Cardiac septum (tissue), 1 donor: ENCODE measurements at regions of chr16 and their contacts with region 1.

Region 1: GRCh38 chr16:13873835-13874438 is 46.0 kb upstream of the ERCC4 start:
- DNase-seq: no peak

Region 2: DNA sequence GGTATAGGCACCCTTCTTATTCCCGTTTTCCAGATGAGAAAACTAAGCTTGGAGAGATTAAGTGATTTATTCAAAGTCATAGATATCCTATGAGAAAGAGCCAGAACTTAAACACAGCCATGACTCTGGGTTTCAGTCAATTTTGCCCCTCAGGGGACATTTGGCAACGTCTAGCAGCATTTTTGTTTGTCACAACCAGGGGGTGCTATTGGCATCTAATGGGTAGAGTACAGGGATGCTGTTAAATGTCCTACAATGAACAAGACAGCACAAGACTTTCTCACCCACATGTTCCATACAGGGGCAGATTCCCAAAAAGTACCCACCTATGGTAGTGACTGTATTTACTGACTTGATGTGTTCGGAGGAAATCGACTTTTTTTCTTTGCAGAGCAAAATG is 977.4 kb before region 1 on chr16:
- intact Hi-C with region 1: loop called (anchors 10 kb)
- DNase-seq: no peak

Region 3: DNA sequence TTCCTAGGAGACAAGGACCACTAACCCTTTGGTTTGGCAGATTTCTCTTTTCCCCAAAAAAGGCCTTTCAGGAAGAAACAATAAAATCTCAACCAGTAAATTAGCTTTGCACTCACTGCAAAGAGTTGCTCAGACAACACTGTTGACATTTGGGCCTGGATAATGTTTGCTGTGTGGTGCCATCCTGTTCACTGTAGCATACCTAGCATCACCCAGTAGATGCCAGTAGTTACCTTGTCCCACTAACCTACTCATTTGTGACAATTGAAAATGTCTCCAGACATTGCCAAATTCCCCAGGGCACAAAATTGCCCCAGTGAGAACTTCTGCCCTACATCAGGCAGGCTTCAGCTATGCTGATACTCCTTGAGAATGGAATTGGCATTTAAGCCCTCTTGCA is 131.0 kb before region 1 on chr16:
- intact Hi-C with region 1: loop called (anchors 10 kb)
- DNase-seq: no peak